Adrenal gland (tissue), 19 donors: ENCODE measurements at regions of chr10 and their contacts with region 1.

Region 1: GRCh38 chr10:127853868-127854768 is 38.6 kb downstream of the CLRN3 start:
- DNase-seq: peak; percentile 56 to 81 (median 74)
- H3K4me3 ChIP-seq: no peak overlapping the region
- H3K27ac ChIP-seq: no peak overlapping the region
- H3K4me1 ChIP-seq: no peaks in the 10 kb centered on the region
- H3K27me3 ChIP-seq: no peaks in the 10 kb centered on the region
- CTCF ChIP-seq: peak; percentile 55 to 89 (median 84)
- POLR2A ChIP-seq: no peak

Region 2: DNA sequence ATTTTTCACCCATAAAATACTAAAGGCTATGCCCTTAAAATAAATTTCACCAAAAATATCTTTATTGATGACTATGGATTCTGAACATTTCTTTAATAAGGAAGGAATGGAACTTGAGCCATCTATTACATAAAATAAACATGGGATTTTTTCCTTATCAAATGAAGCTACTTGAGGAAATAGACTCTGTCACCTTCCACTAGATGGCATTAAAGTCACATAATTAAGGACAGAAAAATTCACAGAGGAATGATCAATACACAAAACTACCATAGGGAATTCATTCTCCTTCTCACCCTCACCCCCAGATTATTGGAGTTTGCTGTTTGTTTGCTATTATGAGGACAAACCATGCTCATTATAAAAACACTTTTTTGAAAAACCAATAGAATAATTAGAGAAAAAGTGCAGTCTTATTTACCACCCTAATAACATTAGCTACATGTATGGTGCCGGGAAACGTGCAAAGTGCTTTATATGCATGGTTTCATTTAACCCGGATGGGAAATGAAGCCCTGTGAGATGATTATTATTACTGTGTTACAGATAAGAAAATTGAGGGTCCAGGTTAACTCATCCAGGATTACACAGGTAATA is 138.2 kb before region 1 on chr10:
- intact Hi-C with region 1: loop called (anchors 5 kb)
- DNase-seq: no peak
- H3K4me3 ChIP-seq: no peak overlapping the region
- H3K27ac ChIP-seq: no peak overlapping the region
- H3K4me1 ChIP-seq: no peaks in the 10 kb centered on the region
- H3K27me3 ChIP-seq: peaks cover 6% of the 10 kb centered on the region
- CTCF ChIP-seq: peak; percentile 26 to 68 (median 57)
- POLR2A ChIP-seq: no peak